ENCODE measurements at regions of chr1 and their contacts with region 1.

Region 1: GRCh38 chr1:152495066-152495675 is 15.4 kb upstream of the LCE5A start:
- DNase-seq: peak; percentile 21
- ATAC-seq: peak; percentile 63
- H3K4me3 ChIP-seq: no peak overlapping the region
- H3K27ac ChIP-seq: no peak overlapping the region
- H3K4me1 ChIP-seq: no peaks in the 10 kb centered on the region
- H3K27me3 ChIP-seq: no peaks in the 10 kb centered on the region
- CTCF ChIP-seq: peak; percentile 49
- EP300 ChIP-seq: no peak
- POLR2A ChIP-seq: no peak
- RAD21 ChIP-seq: no peak

Region 2: GRCh38 chr1:152533327-152533938 is 38.3 kb after region 1 on chr1:
- CTCF ChIA-PET with region 1: interaction called, 19 read pairs
- POLR2A ChIA-PET with region 1: no interaction called
- in situ Hi-C with region 1: loop called (anchors 5 kb)
- intact Hi-C with region 1: loop called (anchors 1 kb)
- DNase-seq: peak; percentile 48
- ATAC-seq: peak; percentile 60; the same call in 2 of the 3 replicates
- H3K4me3 ChIP-seq: no peak overlapping the region
- H3K27ac ChIP-seq: no peak overlapping the region
- H3K4me1 ChIP-seq: no peaks in the 10 kb centered on the region
- H3K27me3 ChIP-seq: 0 out of 5 replicates have a peak, but pooled peaks cover 0 to 5% of the 10 kb centered on the region in 2 experiments
- CTCF ChIP-seq: peak; percentile 70
- EP300 ChIP-seq: no peak
- POLR2A ChIP-seq: no peak
- RAD21 ChIP-seq: peak; percentile 49

Measured in HepG2 (cell line).